Brain microvascular endothelial cell (primary cell): ENCODE measurements at regions of chr10 and their contacts with region 1.

Region 1: GRCh38 chr10:103451831-103452505 is at the start of gene CALHM2:
- DNase-seq: peak; percentile 47
- H3K4me3 ChIP-seq: peak within 1 kb of the TSS; percentile 59
- H3K27ac ChIP-seq: no peak within 1 kb of the TSS
- H3K27me3 ChIP-seq: no peaks in the 10 kb centered on the region
- CTCF ChIP-seq: peak; percentile 14

Region 2: GRCh38 chr10:103491493-103492381 is 39.8 kb after region 1 on chr10:
- in situ Hi-C with region 1: loop called (anchors 5 kb)
- DNase-seq: peak; percentile 85
- H3K4me3 ChIP-seq: no peak overlapping the region
- H3K27ac ChIP-seq: no peak overlapping the region
- H3K27me3 ChIP-seq: peaks cover 43% of the 10 kb centered on the region
- CTCF ChIP-seq: no peak